ENCODE measurements at regions of chr7 and their contacts with region 1.

Region 1: GRCh38 chr7:86199881-86200614 is 443.7 kb upstream of the GRM3 start:
- DNase-seq: no peak
- H3K4me3 ChIP-seq: no peak overlapping the region
- H3K27ac ChIP-seq: no peak overlapping the region
- H3K4me1 ChIP-seq: no peaks in the 10 kb centered on the region
- H3K27me3 ChIP-seq: no peaks in the 10 kb centered on the region
- CTCF ChIP-seq: no peak
- POLR2A ChIP-seq: no peak

Region 2: DNA sequence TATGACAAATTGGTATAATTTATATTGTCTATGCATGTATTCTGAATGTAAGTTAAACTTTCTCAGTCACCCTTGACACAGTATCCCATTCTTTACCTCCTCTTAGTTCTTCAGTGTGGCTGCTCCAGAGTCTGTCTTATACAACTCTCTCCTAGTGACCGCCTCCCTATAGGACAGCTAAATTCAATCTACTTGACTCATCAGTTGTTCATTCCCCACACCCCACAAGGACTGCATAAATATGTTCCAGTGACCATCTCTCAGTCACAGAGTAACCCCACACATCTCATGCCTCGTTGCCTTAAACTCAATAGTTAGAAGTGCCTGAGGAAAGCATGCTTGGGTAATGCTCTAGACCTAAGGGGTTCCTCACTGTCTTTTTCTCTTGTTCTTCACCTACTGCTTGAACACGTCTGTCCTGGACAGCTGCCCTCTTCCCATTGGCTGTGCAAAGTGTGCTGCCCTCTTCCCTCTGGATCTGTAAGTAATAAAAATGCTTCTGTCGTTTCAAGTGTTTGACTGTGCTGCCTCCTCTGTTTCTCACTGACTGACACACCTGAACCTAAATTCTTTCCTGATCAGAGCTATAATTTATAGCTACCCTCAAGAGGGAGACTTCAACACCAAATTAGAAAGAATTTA is 50.9 kb before region 1 on chr7:
- CTCF ChIA-PET with region 1: no interaction called
- POLR2A ChIA-PET with region 1: no interaction called
- dilution Hi-C with region 1: no loop called
- intact Hi-C with region 1: no loop called
- DNase-seq: no peak
- H3K4me3 ChIP-seq: no peak overlapping the region
- H3K27ac ChIP-seq: no peak overlapping the region
- H3K4me1 ChIP-seq: no peaks in the 10 kb centered on the region
- H3K27me3 ChIP-seq: no peaks in the 10 kb centered on the region
- CTCF ChIP-seq: no peak
- POLR2A ChIP-seq: no peak

Region 3: DNA sequence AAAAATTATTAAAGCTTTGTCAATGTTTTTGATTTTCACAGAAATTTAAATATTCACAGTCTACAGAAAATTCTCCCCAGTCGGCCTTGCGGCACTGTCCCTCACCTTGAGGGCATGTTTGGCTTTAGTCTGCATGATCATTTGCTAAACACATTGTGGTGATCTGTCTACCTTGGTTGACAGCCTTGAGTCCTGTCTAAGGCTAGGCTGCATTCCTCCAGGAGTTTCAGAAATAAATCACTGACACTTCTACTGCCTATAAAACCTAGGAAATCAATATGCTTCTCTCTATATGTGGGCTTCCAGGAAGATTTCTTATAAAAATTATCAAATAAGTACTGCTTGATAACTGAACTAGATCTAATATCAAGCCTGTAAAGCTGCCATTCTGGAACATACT is 12.9 kb after region 1 on chr7:
- CTCF ChIA-PET with region 1: no interaction called
- POLR2A ChIA-PET with region 1: no interaction called
- dilution Hi-C with region 1: no loop called
- intact Hi-C with region 1: loop called (anchors 2 kb)
- DNase-seq: no peak
- H3K4me3 ChIP-seq: no peak overlapping the region
- H3K27ac ChIP-seq: no peak overlapping the region
- H3K4me1 ChIP-seq: no peaks in the 10 kb centered on the region
- H3K27me3 ChIP-seq: no peaks in the 10 kb centered on the region
- CTCF ChIP-seq: no peak
- POLR2A ChIP-seq: no peak

Measured in endothelial cell of umbilical vein (primary cell).